Astrocyte of the cerebellum (primary cell): ENCODE measurements at regions of chr21 and their contacts with region 1.

Region 1: DNA sequence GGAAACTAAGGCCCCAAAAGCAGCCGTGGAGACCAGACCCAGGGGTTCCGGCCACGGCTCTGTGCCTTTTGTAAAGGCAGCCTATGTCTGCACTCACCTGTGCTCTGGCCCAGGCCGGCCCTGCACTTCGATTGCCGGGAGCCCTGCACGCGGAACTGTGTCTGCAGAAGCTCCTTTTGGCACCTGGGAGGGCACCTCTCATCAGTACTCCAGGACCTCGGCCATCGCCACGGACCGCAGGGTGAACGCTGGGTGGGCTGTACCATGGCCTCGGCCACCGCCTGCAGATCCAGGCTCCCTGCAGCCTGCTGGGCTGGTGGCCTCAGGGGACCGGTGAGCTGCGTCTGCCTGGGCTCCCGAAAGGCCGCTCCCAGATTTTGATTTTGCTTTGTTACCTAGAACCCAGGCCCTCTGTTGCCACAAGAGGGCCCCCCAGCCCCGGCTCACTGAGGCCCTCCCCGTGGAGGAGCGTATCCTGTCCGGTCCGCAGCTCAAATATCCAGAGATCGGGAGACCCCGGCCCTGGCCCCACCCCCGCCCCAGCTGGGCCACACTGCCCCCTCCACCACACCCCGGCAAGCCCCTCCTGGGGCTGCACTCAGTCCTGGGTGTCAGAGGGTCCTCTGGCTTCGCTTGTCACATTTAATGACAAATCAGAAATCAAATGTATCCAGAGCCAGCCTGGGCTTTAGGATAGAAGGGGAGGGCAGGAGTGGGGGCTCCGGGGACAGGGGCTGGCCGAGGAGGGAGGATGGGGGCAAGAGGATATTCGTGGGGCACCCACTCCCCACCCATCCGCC is 60.2 kb upstream of the PDE9A start:
- DNase-seq: peak; percentile 1
- H3K4me3 ChIP-seq: no peak overlapping the region
- CTCF ChIP-seq: peak; percentile 71

Region 2: GRCh38 chr21:42818328-42818749 is 225.1 kb after region 1 on chr21:
- in situ Hi-C with region 1: loop called (anchors 25 kb)
- DNase-seq: no peak
- H3K4me3 ChIP-seq: no peak overlapping the region
- CTCF ChIP-seq: peak; percentile 74

Region 3: GRCh38 chr21:42892931-42893755 is 299.9 kb after region 1 on chr21 and contains the start of gene NDUFV3:
- in situ Hi-C with region 1: no loop called
- DNase-seq: peak; percentile 90
- H3K4me3 ChIP-seq: peak within 1 kb of the TSS; percentile 71
- CTCF ChIP-seq: no peak